ENCODE measurements at regions of chr9 and their contacts with region 1.

Region 1: GRCh38 chr9:83937911-83938323 is 16.7 kb upstream of the KIF27 start:
- DNase-seq: peak; percentile 80
- ATAC-seq: peak; percentile 68
- H3K4me3 ChIP-seq: no peak overlapping the region
- H3K4me3 Mint-ChIP-seq: no peak overlapping the region
- H3K27ac ChIP-seq: no peak overlapping the region
- H3K27ac Mint-ChIP-seq: no peak overlapping the region
- H3K4me1 ChIP-seq: no peaks in the 10 kb centered on the region
- H3K4me1 Mint-ChIP-seq: no peaks in the 10 kb centered on the region
- H3K27me3 ChIP-seq: no peaks in the 10 kb centered on the region
- H3K27me3 Mint-ChIP-seq: no peaks in the 10 kb centered on the region
- CTCF ChIP-seq: peak; percentile 92

Region 2: GRCh38 chr9:82606492-82607382 is 1331.2 kb before region 1 on chr9:
- CTCF ChIA-PET with region 1: no interaction called
- POLR2A ChIA-PET with region 1: no interaction called
- intact Hi-C with region 1: no loop called
- DNase-seq: peak; percentile 68
- ATAC-seq: peak; percentile 33
- H3K4me3 ChIP-seq: no peak overlapping the region
- H3K4me3 Mint-ChIP-seq: no peak overlapping the region
- H3K27ac ChIP-seq: no peak overlapping the region
- H3K27ac Mint-ChIP-seq: no peak overlapping the region
- H3K4me1 ChIP-seq: no peaks in the 10 kb centered on the region
- H3K4me1 Mint-ChIP-seq: no peaks in the 10 kb centered on the region
- H3K27me3 ChIP-seq: no peaks in the 10 kb centered on the region
- H3K27me3 Mint-ChIP-seq: no peaks in the 10 kb centered on the region
- CTCF ChIP-seq: peak; percentile 65

Region 3: GRCh38 chr9:84261082-84261746 is 323.3 kb after region 1 on chr9:
- CTCF ChIA-PET with region 1: interaction called, 54 read pairs
- POLR2A ChIA-PET with region 1: no interaction called
- intact Hi-C with region 1: no loop called
- DNase-seq: peak; percentile 65
- ATAC-seq: peak; percentile 58
- H3K4me3 ChIP-seq: no peak overlapping the region
- H3K4me3 Mint-ChIP-seq: peak overlapping the region; percentile 61
- H3K27ac ChIP-seq: no peak overlapping the region
- H3K27ac Mint-ChIP-seq: no peak overlapping the region
- H3K4me1 ChIP-seq: peaks cover 3 to 8% of the 10 kb centered on the region in 2 donors
- H3K4me1 Mint-ChIP-seq: peaks cover 4% of the 10 kb centered on the region
- H3K27me3 ChIP-seq: peaks cover 0 to 4% (median 2%) of the 10 kb centered on the region in 4 experiments
- H3K27me3 Mint-ChIP-seq: peaks cover 24% of the 10 kb centered on the region
- CTCF ChIP-seq: peak; percentile 79